ENCODE measurements at regions of chr1 and their contacts with region 1.

Region 1: GRCh38 chr1:3483801-3484444 is 29.5 kb downstream of the ARHGEF16 start:
- DNase-seq: peak in 2 of 10 donors; percentile 36 to 63
- H3K4me3 ChIP-seq: no peak overlapping the region
- H3K27ac ChIP-seq: no peak overlapping the region
- H3K27me3 ChIP-seq: no peaks in the 10 kb centered on the region
- CTCF ChIP-seq: peak in 54 of 56 donors; percentile 40 to 90 (median 78)

Region 2: DNA sequence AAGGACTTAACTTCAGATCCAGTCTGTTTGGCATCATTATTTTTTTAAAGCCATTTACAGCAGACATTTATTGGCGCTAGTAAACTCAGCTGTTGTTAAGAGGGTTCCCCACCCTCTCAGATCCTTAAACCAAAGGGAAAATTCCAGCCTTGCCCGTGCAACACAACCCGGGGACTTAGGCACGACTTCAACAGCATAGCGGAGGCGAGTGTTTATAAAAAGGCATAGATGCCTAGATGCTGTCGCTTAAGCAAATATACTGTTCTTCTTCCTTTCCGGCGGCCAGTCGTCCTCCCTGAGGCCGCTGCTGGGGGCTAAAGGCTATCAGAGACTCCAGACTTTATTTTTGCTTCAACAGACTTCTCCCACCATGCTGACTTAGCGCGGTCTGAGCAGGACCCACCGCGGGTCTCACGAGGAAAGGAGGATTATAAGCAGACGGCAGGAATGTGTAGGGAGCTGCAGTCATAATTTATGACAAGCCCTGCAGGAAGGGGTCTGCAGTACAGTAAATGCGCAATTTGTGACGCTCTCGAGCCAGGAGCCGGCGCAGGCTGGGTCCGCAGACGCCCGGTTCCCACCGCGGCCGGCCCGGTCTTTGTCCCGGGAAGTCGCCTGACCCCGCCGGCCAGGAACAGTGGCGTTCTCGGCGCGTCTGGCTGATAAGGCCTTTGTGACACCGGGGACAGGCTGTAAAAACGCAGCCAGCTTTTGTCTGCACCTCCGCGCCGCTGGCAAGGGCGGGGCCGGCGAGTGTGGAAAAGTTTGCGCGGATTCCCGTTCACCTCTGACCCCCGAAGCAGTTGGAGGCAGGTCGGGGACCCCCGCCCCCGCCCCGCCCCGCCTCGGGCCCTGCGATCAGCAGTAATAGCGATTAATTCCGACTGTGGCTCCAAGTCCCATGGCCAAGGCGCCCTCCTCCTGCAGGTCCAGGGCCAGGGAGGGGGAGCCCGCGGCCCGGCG is 90.6 kb before region 1 on chr1:
- intact Hi-C with region 1: no loop called
- DNase-seq: no peak
- H3K4me3 ChIP-seq: peak overlapping the region in 37 of 59 donors; percentile 2 to 51 (median 26)
- H3K27ac ChIP-seq: peak overlapping the region in 4 of 59 donors; percentile 4 to 53 (median 8)
- H3K27me3 ChIP-seq: peaks cover 0 to 64% (median 34%) of the 10 kb centered on the region in 45 donors
- CTCF ChIP-seq: no peak

Region 3: GRCh38 chr1:3453203-3453761 is 30.6 kb before region 1 on chr1:
- intact Hi-C with region 1: loop called (anchors 1 to 2 kb)
- DNase-seq: peak; percentile 66 to 88 (median 74)
- H3K4me3 ChIP-seq: no peak overlapping the region
- H3K27ac ChIP-seq: peak overlapping the region in 2 of 59 donors; percentile 36 to 56
- H3K27me3 ChIP-seq: peaks cover 0 to 14% (median 0%) of the 10 kb centered on the region in 45 donors
- CTCF ChIP-seq: peak; percentile 66 to 99 (median 96)